ENCODE measurements at regions of chr6 and their contacts with region 1.

Region 1: GRCh38 chr6:110688661-110689268 is 126.5 kb downstream of the CDK19 start:
- DNase-seq: no peak
- ATAC-seq: peak in 2 of 4 donors; percentile 38 to 42
- H3K4me3 ChIP-seq: no peak overlapping the region
- H3K27ac ChIP-seq: no peak overlapping the region
- H3K4me1 ChIP-seq: peaks cover 0 to 30% (median 0%) of the 10 kb centered on the region in 12 donors
- H3K27me3 ChIP-seq: no peaks in the 10 kb centered on the region
- CTCF ChIP-seq: no peak
- POLR2A ChIP-seq: no peak

Region 2: DNA sequence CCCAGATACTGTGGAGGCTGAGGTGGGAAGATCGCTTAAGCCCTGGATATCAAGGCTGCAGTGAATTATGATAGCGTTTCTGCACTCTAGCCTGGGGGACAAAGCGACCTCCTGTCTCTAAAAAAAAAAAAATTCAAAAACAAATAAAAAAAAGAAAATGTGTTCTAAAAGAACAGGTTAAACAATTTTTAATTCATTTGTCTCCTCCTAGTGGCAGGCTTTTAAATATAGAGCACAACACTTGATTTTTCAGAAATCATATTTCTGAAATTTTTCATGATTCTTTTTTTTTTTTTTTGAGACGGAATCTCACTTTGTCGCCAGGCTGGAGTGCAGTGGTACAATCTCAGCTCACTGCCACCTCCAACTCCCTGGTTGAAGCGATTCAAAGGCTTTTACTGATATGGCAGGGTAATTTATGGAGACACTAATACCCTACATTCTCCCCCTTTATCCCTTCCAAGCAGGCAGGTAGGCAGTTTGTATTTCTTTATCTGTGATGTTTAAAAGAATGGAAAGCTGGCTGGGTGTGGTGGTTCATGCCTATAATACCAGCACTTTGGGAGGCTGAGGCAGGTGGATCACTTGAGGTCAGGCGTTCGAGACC is 261.0 kb after region 1 on chr6:
- intact Hi-C with region 1: loop called in 8 of 10 experiments (anchors 2 to 5 kb)
- DNase-seq: no peak
- ATAC-seq: no peak
- H3K4me3 ChIP-seq: no peak overlapping the region
- H3K27ac ChIP-seq: no peak overlapping the region
- H3K4me1 ChIP-seq: peaks cover 0 to 13% (median 0%) of the 10 kb centered on the region in 12 donors
- H3K27me3 ChIP-seq: no peaks in the 10 kb centered on the region
- CTCF ChIP-seq: peak; percentile 36 to 67 (median 53)
- POLR2A ChIP-seq: no peak